ENCODE measurements at regions of chrX and their contacts with region 1.

Region 1: GRCh38 chrX:115560978-115561604 is at the start of gene PLS3:
- DNase-seq: peak; percentile 84
- H3K4me3 ChIP-seq: peak within 1 kb of the TSS; percentile 60 to 89 (median 77)
- H3K27ac ChIP-seq: peak within 1 kb of the TSS; percentile 94
- H3K4me1 ChIP-seq: peaks cover 38% of the 10 kb centered on the region
- H3K27me3 ChIP-seq: no peaks in the 10 kb centered on the region
- CTCF ChIP-seq: no peak
- POLR2A ChIP-seq: peak; percentile 79
- total RNA-seq, gene PLS3: 305 and 329 TPM in 2 replicates

Region 2: DNA sequence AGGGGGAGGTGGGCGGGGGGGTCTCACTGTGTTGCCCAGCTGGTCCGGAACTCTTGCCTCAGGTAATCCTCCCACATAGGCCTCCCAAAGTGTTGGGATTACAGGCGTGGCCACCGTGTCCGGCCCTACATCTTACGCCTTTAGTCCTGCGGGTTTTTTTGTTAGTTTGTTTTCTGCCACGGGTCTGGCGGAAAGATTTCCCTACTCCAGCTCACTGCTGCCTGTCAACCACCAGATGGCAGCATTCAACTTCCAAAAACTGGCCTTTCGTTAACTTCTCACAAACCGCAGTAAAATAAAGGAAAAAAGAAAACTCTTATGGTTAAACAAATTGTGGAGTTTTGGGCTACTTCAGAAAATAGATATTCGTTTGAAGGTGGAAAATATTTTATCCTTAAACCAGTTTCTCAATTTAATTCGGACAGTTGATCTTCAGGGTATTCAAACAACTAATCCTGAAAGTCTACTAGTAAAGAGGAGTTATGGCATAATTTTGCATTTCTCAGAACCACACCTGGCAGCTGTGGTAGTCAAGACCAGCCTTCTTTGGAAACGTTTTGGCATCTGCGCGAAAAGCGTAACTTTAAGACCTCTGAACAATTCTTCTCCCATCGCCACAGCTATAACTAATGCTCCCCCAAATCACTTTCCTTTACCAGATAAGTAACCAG is 230.5 kb before region 1 on chrX:
- CTCF ChIA-PET with region 1: interaction called, 23 read pairs
- POLR2A ChIA-PET with region 1: interaction called, 4 read pairs
- dilution Hi-C with region 1: no loop called
- intact Hi-C with region 1: loop called (anchors 2 kb)
- DNase-seq: peak; percentile 65
- H3K4me3 ChIP-seq: peak overlapping the region in 1 of 3 experiments; percentile 21
- H3K27ac ChIP-seq: no peak overlapping the region
- H3K4me1 ChIP-seq: no peaks in the 10 kb centered on the region
- H3K27me3 ChIP-seq: no peaks in the 10 kb centered on the region
- CTCF ChIP-seq: peak; percentile 52 to 55
- POLR2A ChIP-seq: no peak

Region 3: GRCh38 chrX:115459883-115460880 is 100.9 kb before region 1 on chrX:
- CTCF ChIA-PET with region 1: no interaction called
- POLR2A ChIA-PET with region 1: no interaction called
- dilution Hi-C with region 1: no loop called
- intact Hi-C with region 1: loop called (anchors 2 kb)
- DNase-seq: peak; percentile 84
- H3K4me3 ChIP-seq: no peak overlapping the region
- H3K27ac ChIP-seq: no peak overlapping the region
- H3K4me1 ChIP-seq: peaks cover 13% of the 10 kb centered on the region
- H3K27me3 ChIP-seq: no peaks in the 10 kb centered on the region
- CTCF ChIP-seq: no peak
- POLR2A ChIP-seq: no peak

Region 4: GRCh38 chrX:115533485-115533884 is 27.6 kb before region 1 on chrX:
- CTCF ChIA-PET with region 1: no interaction called
- POLR2A ChIA-PET with region 1: no interaction called
- dilution Hi-C with region 1: no loop called
- intact Hi-C with region 1: loop called (anchors 2 kb)
- DNase-seq: no peak
- H3K4me3 ChIP-seq: no peak overlapping the region
- H3K27ac ChIP-seq: no peak overlapping the region
- H3K4me1 ChIP-seq: peaks cover 32% of the 10 kb centered on the region
- H3K27me3 ChIP-seq: no peaks in the 10 kb centered on the region
- CTCF ChIP-seq: no peak
- POLR2A ChIP-seq: no peak

Region 5: DNA sequence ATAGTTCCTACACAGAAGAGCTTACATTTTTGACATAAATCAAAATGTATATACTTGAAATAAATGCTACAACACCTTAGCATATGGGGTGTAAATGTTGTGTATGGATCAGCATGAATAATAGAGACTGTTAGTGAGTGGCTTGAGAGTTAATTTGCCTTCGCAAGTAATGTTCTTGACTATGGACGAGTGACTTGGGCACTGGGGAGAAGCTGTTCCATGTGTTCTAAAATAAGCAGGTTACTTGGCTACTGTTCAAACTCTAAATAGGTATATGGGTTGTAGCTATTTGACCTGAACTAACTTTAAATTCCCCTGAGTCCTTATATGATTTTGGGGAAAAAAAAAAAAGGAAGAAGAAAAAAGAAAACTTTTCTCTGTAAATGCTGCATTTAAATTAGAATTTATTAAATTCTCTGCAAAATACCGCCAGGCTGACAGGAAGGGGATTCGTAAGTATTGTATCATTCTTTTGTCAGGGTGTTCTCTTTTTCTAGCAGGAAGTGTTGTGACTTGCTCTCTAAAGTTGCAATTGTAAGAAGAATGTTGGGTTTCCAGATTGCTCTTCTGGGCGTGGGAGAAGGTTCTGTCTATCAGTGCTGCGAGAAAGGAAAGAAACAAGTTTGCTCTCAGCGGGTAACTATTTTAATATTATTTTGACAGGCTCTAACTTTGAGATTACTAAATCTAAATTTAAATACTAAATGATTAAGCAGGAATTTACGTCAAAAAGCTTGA is 32.1 kb after region 1 on chrX:
- CTCF ChIA-PET with region 1: no interaction called
- POLR2A ChIA-PET with region 1: interaction called, 5 read pairs
- dilution Hi-C with region 1: no loop called
- intact Hi-C with region 1: loop called (anchors 1 kb)
- DNase-seq: peak; percentile 71
- H3K4me3 ChIP-seq: peak overlapping the region; percentile 7 to 99 (median 84)
- H3K27ac ChIP-seq: peak overlapping the region; percentile 93
- H3K4me1 ChIP-seq: peaks cover 30% of the 10 kb centered on the region
- H3K27me3 ChIP-seq: no peaks in the 10 kb centered on the region
- CTCF ChIP-seq: no peak
- POLR2A ChIP-seq: peak; percentile 75

Region 6: DNA sequence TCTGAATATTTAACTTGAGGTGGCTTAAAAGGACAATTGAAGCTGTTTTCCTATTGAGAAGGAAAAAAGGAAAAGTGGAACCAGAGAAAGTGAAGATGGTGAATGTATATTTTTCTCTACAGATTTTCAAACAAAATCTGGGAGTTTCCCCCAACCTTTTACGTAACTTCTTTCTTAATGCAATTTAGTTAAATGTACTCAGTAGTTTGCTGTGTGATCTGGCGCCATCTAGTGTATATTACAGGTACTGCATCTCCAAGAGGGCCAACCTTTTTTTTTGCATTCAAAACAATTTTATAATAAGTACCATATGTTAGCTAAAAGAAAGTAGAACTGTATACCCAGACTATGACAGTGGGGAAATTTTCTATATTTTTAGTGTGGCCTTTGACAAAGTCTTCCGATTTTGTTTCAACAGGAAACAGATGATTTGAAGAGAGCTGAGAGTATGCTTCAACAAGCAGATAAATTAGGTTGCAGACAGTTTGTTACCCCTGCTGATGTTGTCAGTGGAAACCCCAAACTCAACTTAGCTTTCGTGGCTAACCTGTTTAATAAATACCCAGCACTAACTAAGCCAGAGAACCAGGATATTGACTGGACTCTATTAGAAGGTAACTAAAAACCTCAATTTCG is 81.9 kb after region 1 on chrX:
- CTCF ChIA-PET with region 1: interaction called, 7 read pairs
- POLR2A ChIA-PET with region 1: no interaction called
- dilution Hi-C with region 1: no loop called
- intact Hi-C with region 1: loop called (anchors 2 kb)
- DNase-seq: peak; percentile 69
- H3K4me3 ChIP-seq: no peak overlapping the region
- H3K27ac ChIP-seq: no peak overlapping the region
- H3K4me1 ChIP-seq: peaks cover 10% of the 10 kb centered on the region
- H3K27me3 ChIP-seq: no peaks in the 10 kb centered on the region
- CTCF ChIP-seq: peak; percentile 46 to 48
- POLR2A ChIP-seq: no peak

Measured in endothelial cell of umbilical vein (primary cell).